ENCODE measurements at regions of chr3 and their contacts with region 1.

Region 1: GRCh38 chr3:141266797-141267555 is 35.4 kb downstream of the PXYLP1 start:
- DNase-seq: peak in 8 of 9 experiments; percentile 32 to 84 (median 60)
- ATAC-seq: peak; percentile 79
- H3K4me3 ChIP-seq: peak overlapping the region; percentile 55 to 62
- H3K4me3 Mint-ChIP-seq: peak overlapping the region; percentile 88
- H3K27ac ChIP-seq: peak overlapping the region; percentile 74 to 77
- H3K27ac Mint-ChIP-seq: peak overlapping the region; percentile 96
- H3K4me1 ChIP-seq: peaks cover 37% of the 10 kb centered on the region
- H3K4me1 Mint-ChIP-seq: peaks cover 50% of the 10 kb centered on the region
- H3K27me3 ChIP-seq: no peaks in the 10 kb centered on the region
- H3K27me3 Mint-ChIP-seq: no peaks in the 10 kb centered on the region
- CTCF ChIP-seq: no peak

Region 2: GRCh38 chr3:139935016-139935865 is 1331.7 kb before region 1 on chr3 and contains the start of gene CLSTN2:
- CTCF ChIA-PET with region 1: no interaction called
- POLR2A ChIA-PET with region 1: no interaction called
- intact Hi-C with region 1: no loop called
- DNase-seq: no peak
- ATAC-seq: no peak
- H3K4me3 ChIP-seq: no peak within 1 kb of the TSS
- H3K4me3 Mint-ChIP-seq: peak within 1 kb of the TSS; percentile 26
- H3K27ac ChIP-seq: no peak within 1 kb of the TSS
- H3K27ac Mint-ChIP-seq: no peak within 1 kb of the TSS
- H3K4me1 ChIP-seq: no peaks in the 10 kb centered on the region
- H3K4me1 Mint-ChIP-seq: peaks cover 9% of the 10 kb centered on the region
- H3K27me3 ChIP-seq: peaks cover 5 to 7% of the 10 kb centered on the region in 2 experiments
- H3K27me3 Mint-ChIP-seq: peaks cover 42% of the 10 kb centered on the region
- CTCF ChIP-seq: no peak
- total RNA-seq, gene CLSTN2: not detected

Region 3: GRCh38 chr3:141237701-141238521 is 29.1 kb before region 1 on chr3:
- CTCF ChIA-PET with region 1: interaction called, 39 read pairs
- POLR2A ChIA-PET with region 1: interaction called, 198 read pairs
- intact Hi-C with region 1: loop called in 1 of 2 experiments (anchors 2 kb)
- DNase-seq: peak in 3 of 9 experiments; percentile 19 to 55 (median 29)
- ATAC-seq: no peak
- H3K4me3 ChIP-seq: no peak overlapping the region
- H3K4me3 Mint-ChIP-seq: peak overlapping the region; percentile 69
- H3K27ac ChIP-seq: peak overlapping the region in 1 of 2 experiments; percentile 66
- H3K27ac Mint-ChIP-seq: peak overlapping the region; percentile 90
- H3K4me1 ChIP-seq: peaks cover 74% of the 10 kb centered on the region
- H3K4me1 Mint-ChIP-seq: peaks cover 90% of the 10 kb centered on the region
- H3K27me3 ChIP-seq: no peaks in the 10 kb centered on the region
- H3K27me3 Mint-ChIP-seq: no peaks in the 10 kb centered on the region
- CTCF ChIP-seq: no peak

Region 4: DNA sequence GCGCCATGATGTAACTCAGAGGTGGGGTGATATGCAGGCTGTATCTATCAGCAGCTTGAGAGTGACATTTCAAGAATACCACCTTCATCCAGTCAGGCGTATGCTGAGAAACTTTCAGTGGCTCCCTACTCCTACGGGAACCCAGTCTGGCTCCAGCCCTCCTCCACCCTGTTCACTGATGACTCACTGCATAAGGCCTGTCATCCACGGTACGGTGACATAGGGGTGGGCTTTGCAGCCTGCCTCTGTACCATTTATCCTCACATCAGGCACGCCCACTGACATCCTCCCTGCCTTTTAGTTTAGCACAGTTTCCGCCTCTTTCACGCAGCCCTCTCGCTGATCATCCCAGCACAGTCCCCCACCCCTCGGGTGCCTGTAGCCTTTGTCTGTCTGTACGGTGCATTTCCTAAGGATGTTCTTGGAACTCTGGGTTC is 23.7 kb before region 1 on chr3:
- CTCF ChIA-PET with region 1: interaction called, 5 read pairs
- POLR2A ChIA-PET with region 1: interaction called, 198 read pairs
- intact Hi-C with region 1: loop called in 1 of 2 experiments (anchors 2 kb)
- DNase-seq: peak; percentile 19 to 89 (median 74)
- ATAC-seq: peak; percentile 98
- H3K4me3 ChIP-seq: no peak overlapping the region
- H3K4me3 Mint-ChIP-seq: peak overlapping the region; percentile 57
- H3K27ac ChIP-seq: peak overlapping the region; percentile 2 to 58
- H3K27ac Mint-ChIP-seq: peak overlapping the region; percentile 93
- H3K4me1 ChIP-seq: peaks cover 39% of the 10 kb centered on the region
- H3K4me1 Mint-ChIP-seq: peaks cover 52% of the 10 kb centered on the region
- H3K27me3 ChIP-seq: no peaks in the 10 kb centered on the region
- H3K27me3 Mint-ChIP-seq: no peaks in the 10 kb centered on the region
- CTCF ChIP-seq: no peak

Region 5: GRCh38 chr3:141255846-141256261 is 11.1 kb before region 1 on chr3:
- CTCF ChIA-PET with region 1: interaction called, 31 read pairs
- POLR2A ChIA-PET with region 1: interaction called, 38 read pairs
- intact Hi-C with region 1: loop called in 1 of 2 experiments (anchors 1 kb)
- DNase-seq: peak in 6 of 9 experiments; percentile 29 to 79 (median 58)
- ATAC-seq: peak; percentile 98
- H3K4me3 ChIP-seq: no peak overlapping the region
- H3K4me3 Mint-ChIP-seq: no peak overlapping the region
- H3K27ac ChIP-seq: no peak overlapping the region
- H3K27ac Mint-ChIP-seq: peak overlapping the region; percentile 80
- H3K4me1 ChIP-seq: peaks cover 13% of the 10 kb centered on the region
- H3K4me1 Mint-ChIP-seq: peaks cover 35% of the 10 kb centered on the region
- H3K27me3 ChIP-seq: no peaks in the 10 kb centered on the region
- H3K27me3 Mint-ChIP-seq: no peaks in the 10 kb centered on the region
- CTCF ChIP-seq: peak; percentile 55

Region 6: GRCh38 chr3:141279077-141279967 is 12.3 kb after region 1 on chr3:
- CTCF ChIA-PET with region 1: interaction called, 10 read pairs
- POLR2A ChIA-PET with region 1: interaction called, 13 read pairs
- intact Hi-C with region 1: loop called in 1 of 2 experiments (anchors 1 kb)
- DNase-seq: peak in 3 of 9 experiments; percentile 30 to 65 (median 46)
- ATAC-seq: peak; percentile 89
- H3K4me3 ChIP-seq: no peak overlapping the region
- H3K4me3 Mint-ChIP-seq: no peak overlapping the region
- H3K27ac ChIP-seq: no peak overlapping the region
- H3K27ac Mint-ChIP-seq: peak overlapping the region; percentile 32
- H3K4me1 ChIP-seq: peaks cover 18% of the 10 kb centered on the region
- H3K4me1 Mint-ChIP-seq: peaks cover 23% of the 10 kb centered on the region
- H3K27me3 ChIP-seq: no peaks in the 10 kb centered on the region
- H3K27me3 Mint-ChIP-seq: no peaks in the 10 kb centered on the region
- CTCF ChIP-seq: peak; percentile 59

Region 7: GRCh38 chr3:141291559-141292355 is 24.8 kb after region 1 on chr3:
- CTCF ChIA-PET with region 1: no interaction called
- POLR2A ChIA-PET with region 1: interaction called, 10 read pairs
- intact Hi-C with region 1: no loop called
- DNase-seq: no peak
- ATAC-seq: no peak
- H3K4me3 ChIP-seq: no peak overlapping the region
- H3K4me3 Mint-ChIP-seq: no peak overlapping the region
- H3K27ac ChIP-seq: no peak overlapping the region
- H3K27ac Mint-ChIP-seq: peak overlapping the region; percentile 62
- H3K4me1 ChIP-seq: peaks cover 3% of the 10 kb centered on the region
- H3K4me1 Mint-ChIP-seq: peaks cover 23% of the 10 kb centered on the region
- H3K27me3 ChIP-seq: no peaks in the 10 kb centered on the region
- H3K27me3 Mint-ChIP-seq: no peaks in the 10 kb centered on the region
- CTCF ChIP-seq: no peak

Region 8: DNA sequence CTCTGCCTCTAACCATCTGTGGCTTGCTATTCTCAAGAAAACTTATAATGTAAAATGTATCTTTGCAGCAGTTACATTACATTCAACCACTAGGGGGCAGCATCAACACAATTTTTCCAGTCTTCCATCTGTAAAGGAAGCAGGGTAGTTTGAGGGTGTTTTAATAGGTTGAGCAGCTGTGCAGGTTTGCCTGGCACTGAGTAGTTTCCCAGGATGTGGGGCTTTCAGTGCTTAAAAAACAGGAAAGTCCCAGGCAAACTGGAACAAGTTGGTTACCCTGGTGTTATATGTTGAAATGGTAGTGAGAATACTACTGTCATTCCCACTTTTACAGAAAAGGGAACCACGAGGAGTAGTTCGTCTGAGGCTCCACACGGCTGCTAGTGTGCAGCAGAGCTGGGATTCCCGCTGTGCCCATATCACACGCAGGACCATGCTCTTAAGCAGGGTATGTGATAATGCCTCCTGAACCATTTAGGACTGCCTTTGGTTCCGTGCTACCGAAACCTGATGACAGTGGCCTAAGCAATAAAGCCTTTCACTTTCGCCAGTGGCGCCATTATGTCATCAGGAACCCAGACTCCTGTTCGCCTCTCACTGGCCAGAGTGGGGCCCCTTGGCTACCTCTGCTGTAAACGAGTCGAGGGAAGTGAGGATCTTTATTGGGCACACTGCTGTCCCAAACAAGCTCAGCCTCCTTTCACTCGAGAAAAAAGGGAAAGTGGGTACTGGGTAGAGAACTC is 36.7 kb after region 1 on chr3:
- CTCF ChIA-PET with region 1: interaction called, 5 read pairs
- POLR2A ChIA-PET with region 1: interaction called, 11 read pairs
- intact Hi-C with region 1: loop called in 1 of 2 experiments (anchors 2 kb)
- DNase-seq: peak in 8 of 9 experiments; percentile 40 to 85 (median 64)
- ATAC-seq: peak; percentile 56
- H3K4me3 ChIP-seq: no peak overlapping the region
- H3K4me3 Mint-ChIP-seq: no peak overlapping the region
- H3K27ac ChIP-seq: no peak overlapping the region
- H3K27ac Mint-ChIP-seq: no peak overlapping the region
- H3K4me1 ChIP-seq: peaks cover 60% of the 10 kb centered on the region
- H3K4me1 Mint-ChIP-seq: peaks cover 66% of the 10 kb centered on the region
- H3K27me3 ChIP-seq: no peaks in the 10 kb centered on the region
- H3K27me3 Mint-ChIP-seq: no peaks in the 10 kb centered on the region
- CTCF ChIP-seq: peak; percentile 85